HepG2 (cell line): ENCODE measurements at regions of chr19 and their contacts with region 1.

Region 1: GRCh38 chr19:45770192-45771101 is 1.4 kb upstream of the SIX5 start:
- DNase-seq: peak; percentile 96
- ATAC-seq: peak; percentile 77
- H3K4me3 ChIP-seq: peak overlapping the region; percentile 69 to 83 (median 70)
- H3K27ac ChIP-seq: peak overlapping the region; percentile 85
- H3K4me1 ChIP-seq: peaks cover 27% of the 10 kb centered on the region
- H3K27me3 ChIP-seq: no peaks in the 10 kb centered on the region
- CTCF ChIP-seq: peak; percentile 94
- EP300 ChIP-seq: peak in 1 of 2 experiments; percentile 5; a peak in 1 of 4 replicates
- POLR2A ChIP-seq: peak; percentile 38 to 76
- RAD21 ChIP-seq: peak; percentile 88

Region 2: DNA sequence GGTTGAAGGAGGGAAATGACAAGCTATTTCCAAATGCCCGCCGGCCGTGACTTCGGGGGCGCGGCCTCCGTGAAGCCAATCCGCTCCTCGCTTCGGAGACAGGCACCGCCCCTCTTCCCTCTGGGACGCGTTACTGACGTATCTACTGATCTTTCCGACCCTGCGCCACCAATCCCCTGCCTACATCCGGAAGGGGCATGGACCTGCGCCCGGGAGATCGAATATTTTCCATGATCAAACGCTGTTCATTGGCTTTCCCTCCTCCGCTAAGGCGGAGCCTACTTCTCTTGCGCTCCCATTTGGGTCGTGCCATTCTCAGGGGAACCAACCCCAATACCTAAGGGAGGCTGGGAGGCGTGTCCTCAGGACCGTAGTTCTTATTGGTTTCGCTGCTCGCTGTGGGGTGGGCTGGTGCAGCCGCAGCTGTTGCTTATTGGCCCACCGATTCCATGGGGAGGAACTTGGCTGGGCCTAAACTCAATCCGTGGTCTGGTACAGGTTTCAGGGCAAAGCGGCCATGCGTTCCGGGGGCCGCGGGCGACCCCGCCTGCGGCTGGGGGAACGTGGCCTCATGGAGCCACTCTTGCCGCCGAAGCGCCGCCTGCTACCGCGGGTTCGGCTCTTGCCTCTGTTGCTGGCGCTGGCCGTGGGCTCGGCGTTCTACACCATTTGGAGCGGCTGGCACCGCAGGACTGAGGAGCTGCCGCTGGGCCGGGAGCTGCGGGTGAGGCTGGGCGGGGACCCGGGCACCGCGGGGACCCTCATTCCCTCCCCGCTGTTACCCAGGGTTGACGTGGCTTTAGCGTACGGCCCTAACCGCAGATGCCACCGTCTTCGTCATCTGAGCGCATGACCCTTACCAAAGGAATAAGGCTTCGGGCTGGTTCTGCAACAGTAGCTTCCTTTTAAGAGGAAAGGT is 78.0 kb before region 1 on chr19 and contains the start of gene QPCTL:
- CTCF ChIA-PET with region 1: no interaction called
- POLR2A ChIA-PET with region 1: interaction called, 35 read pairs
- in situ Hi-C with region 1: no loop called
- intact Hi-C with region 1: loop called (anchors 2 kb)
- DNase-seq: peak; percentile 100
- ATAC-seq: peak; percentile 96
- H3K4me3 ChIP-seq: peak within 1 kb of the TSS; percentile 92 to 95 (median 94)
- H3K27ac ChIP-seq: peak within 1 kb of the TSS; percentile 90
- H3K4me1 ChIP-seq: peaks cover 17% of the 10 kb centered on the region
- H3K27me3 ChIP-seq: no peaks in the 10 kb centered on the region; a peak in 1 of 5 replicates
- CTCF ChIP-seq: no peak
- EP300 ChIP-seq: no peak
- POLR2A ChIP-seq: peak; percentile 95 to 96
- RAD21 ChIP-seq: peak; percentile 49; the same call in 1 of the 2 replicates
- total RNA-seq, gene QPCTL: 6.8 and 16.0 TPM in 2 replicates

Region 3: DNA sequence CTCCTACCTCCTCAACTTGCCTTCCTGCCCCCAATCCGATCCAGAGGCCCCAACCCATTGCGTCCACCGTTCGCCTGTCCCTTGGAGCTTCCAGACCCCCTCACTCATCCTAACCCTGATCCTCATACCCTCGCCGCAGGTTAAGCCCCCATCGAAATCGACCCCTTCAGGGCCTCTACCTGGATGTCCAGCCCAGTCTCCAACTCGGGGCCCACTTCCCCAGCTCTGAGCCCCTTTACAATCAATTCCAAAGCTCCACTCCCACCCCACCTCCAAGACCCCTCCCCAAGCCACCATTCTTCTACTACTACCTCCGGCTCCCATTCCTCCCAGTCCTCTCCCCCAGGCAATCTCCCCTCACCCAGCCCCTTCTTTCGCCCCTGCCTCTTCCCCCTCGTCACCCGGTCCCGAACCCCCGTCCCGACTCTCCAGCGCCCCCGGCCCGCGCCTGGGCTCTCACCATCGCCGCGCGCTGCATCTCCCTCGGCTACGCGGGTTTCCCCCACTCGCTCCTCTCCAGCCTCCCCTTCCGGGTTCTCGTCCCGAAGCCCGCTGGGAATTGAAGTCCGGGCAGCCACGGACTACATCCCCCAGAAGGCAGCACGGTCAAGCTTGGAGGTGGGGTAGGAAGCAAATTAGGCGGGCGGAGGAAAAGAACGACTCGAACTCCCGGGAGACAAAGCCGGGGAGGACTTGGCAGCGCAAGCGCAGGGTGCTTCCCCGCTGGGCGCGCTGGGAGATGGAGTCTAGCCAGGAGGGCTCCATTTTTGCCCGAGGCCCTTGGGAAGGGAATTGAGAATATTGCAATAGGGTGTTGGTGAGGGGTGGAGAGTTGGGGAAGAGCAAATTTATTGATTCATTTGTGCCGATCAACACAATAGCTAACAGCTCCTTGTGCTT is 39.8 kb before region 1 on chr19 and contains the start of gene FBXO46:
- CTCF ChIA-PET with region 1: no interaction called
- POLR2A ChIA-PET with region 1: interaction called, 27 read pairs
- in situ Hi-C with region 1: no loop called
- intact Hi-C with region 1: loop called (anchors 5 kb)
- DNase-seq: peak; percentile 96
- ATAC-seq: peak; percentile 98
- H3K4me3 ChIP-seq: peak within 1 kb of the TSS; percentile 85 to 94 (median 90)
- H3K27ac ChIP-seq: peak within 1 kb of the TSS; percentile 50
- H3K4me1 ChIP-seq: peaks cover 40% of the 10 kb centered on the region
- H3K27me3 ChIP-seq: peaks cover 0 to 4% of the 10 kb centered on the region in 2 experiments; a peak in 1 of 5 replicates
- CTCF ChIP-seq: peak; percentile 75
- EP300 ChIP-seq: peak in 1 of 2 experiments; percentile 12; a peak in 1 of 4 replicates
- POLR2A ChIP-seq: peak in 1 of 2 experiments; percentile 84; a peak in 2 of 4 replicates
- RAD21 ChIP-seq: no peak
- total RNA-seq, gene FBXO46: 4.7 and 6.2 TPM in 2 replicates

Region 4: GRCh38 chr19:45792470-45793177 is 22.2 kb after region 1 on chr19 and contains the start of gene DMWD:
- CTCF ChIA-PET with region 1: no interaction called
- POLR2A ChIA-PET with region 1: interaction called, 23 read pairs
- in situ Hi-C with region 1: no loop called
- intact Hi-C with region 1: no loop called
- DNase-seq: peak; percentile 96
- ATAC-seq: peak; percentile 92
- H3K4me3 ChIP-seq: peak within 1 kb of the TSS; percentile 93 to 99 (median 94)
- H3K27ac ChIP-seq: peak within 1 kb of the TSS; percentile 55
- H3K4me1 ChIP-seq: peaks cover 20% of the 10 kb centered on the region
- H3K27me3 ChIP-seq: peaks cover 0 to 9% of the 10 kb centered on the region in 2 experiments; a peak in 1 of 5 replicates
- CTCF ChIP-seq: no peak
- EP300 ChIP-seq: no peak
- POLR2A ChIP-seq: peak; percentile 64 to 76
- RAD21 ChIP-seq: peak; percentile 61; the same call in 1 of the 2 replicates
- total RNA-seq, gene DMWD: 11.0 and 14.9 TPM in 2 replicates

Region 5: GRCh38 chr19:45862564-45863334 is 92.3 kb after region 1 on chr19 and contains the start of gene SYMPK:
- CTCF ChIA-PET with region 1: no interaction called
- POLR2A ChIA-PET with region 1: interaction called, 27 read pairs
- in situ Hi-C with region 1: no loop called
- intact Hi-C with region 1: no loop called
- DNase-seq: peak; percentile 98
- ATAC-seq: peak; percentile 93
- H3K4me3 ChIP-seq: peak within 1 kb of the TSS; percentile 92 to 97 (median 93)
- H3K27ac ChIP-seq: peak within 1 kb of the TSS; percentile 71
- H3K4me1 ChIP-seq: peaks cover 38% of the 10 kb centered on the region
- H3K27me3 ChIP-seq: no peaks in the 10 kb centered on the region; a peak in 1 of 5 replicates
- CTCF ChIP-seq: peak; percentile 30; the same call in 1 of the 2 replicates
- EP300 ChIP-seq: no peak
- POLR2A ChIP-seq: peak in 1 of 2 experiments; percentile 59; a peak in 3 of 4 replicates
- RAD21 ChIP-seq: no peak
- total RNA-seq, gene SYMPK: 19.9 and 21.9 TPM in 2 replicates